GM12878 (cell line): ENCODE measurements at regions of chr11 and their contacts with region 1.

Region 1: GRCh38 chr11:45917623-45918330 is at the start of gene PEX16:
- DNase-seq: peak; percentile 94
- ATAC-seq: peak; percentile 92
- H3K4me3 ChIP-seq: peak within 1 kb of the TSS; percentile 99
- H3K27ac ChIP-seq: peak within 1 kb of the TSS; percentile 92
- H3K4me1 ChIP-seq: peaks cover 18% of the 10 kb centered on the region
- H3K27me3 ChIP-seq: peaks cover 2 to 4% of the 10 kb centered on the region in 2 experiments; a peak in 3 of 4 replicates
- CTCF ChIP-seq: no peak
- EP300 ChIP-seq: no peak; a peak in 1 of 4 replicates
- POLR2A ChIP-seq: peak; percentile 99
- RAD21 ChIP-seq: no peak
- polyA plus RNA-seq, gene PEX16: 1.4 to 5.6 TPM

Region 2: GRCh38 chr11:45665206-45665932 is 252.4 kb before region 1 on chr11 and contains the start of gene CHST1:
- CTCF ChIA-PET with region 1: no interaction called
- POLR2A ChIA-PET with region 1: no interaction called
- RAD21 ChIA-PET with region 1: no interaction called
- SMC1A ChIA-PET with region 1: no interaction called
- in situ Hi-C with region 1: no loop called
- intact Hi-C with region 1: no loop called
- DNase-seq: no peak
- ATAC-seq: peak; percentile 29; the same call in 2 of the 3 replicates
- H3K4me3 ChIP-seq: no peak within 1 kb of the TSS
- H3K27ac ChIP-seq: no peak within 1 kb of the TSS
- H3K4me1 ChIP-seq: no peaks in the 10 kb centered on the region
- H3K27me3 ChIP-seq: peaks cover 21 to 28% of the 10 kb centered on the region in 2 experiments
- CTCF ChIP-seq: no peak
- EP300 ChIP-seq: no peak
- POLR2A ChIP-seq: no peak
- RAD21 ChIP-seq: no peak
- polyA plus RNA-seq, gene CHST1: not detected

Region 3: DNA sequence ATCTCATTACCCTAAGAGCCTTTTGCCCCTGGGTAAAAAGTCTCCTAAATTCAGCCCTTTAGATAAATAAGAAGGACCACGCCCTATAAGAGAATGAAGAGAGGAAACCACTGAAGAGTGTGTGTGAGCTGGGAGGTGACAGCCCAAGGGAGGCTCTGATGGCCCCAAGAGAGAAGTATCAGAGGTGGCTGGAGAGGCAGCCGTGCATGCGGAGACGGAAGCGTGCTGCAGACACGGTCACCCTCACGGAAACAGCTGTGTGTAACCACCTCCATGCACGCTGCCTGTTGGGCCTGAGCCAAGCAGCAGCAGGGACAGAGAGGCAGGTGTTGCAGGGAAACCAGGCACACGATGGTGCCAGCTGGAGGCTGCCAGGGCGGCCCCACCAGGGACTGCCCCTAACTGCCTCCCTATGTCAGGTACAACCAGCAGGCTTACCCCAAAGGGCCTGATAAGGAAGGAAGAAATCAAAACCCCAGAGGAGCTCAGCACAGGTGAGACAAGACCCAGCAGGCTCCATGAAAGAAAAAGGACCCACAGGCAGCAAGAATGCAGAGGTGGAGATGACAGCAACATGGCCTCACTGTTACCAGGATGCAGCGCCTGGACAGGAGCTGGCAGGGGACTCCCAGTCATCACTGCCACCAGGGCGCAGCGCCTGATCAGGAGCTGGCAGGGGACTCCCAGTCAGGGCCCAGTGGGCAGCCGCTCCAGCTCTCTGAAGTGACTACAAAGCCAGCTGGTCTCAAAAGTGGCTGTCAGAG is 12.4 kb after region 1 on chr11:
- CTCF ChIA-PET with region 1: interaction called, 12 read pairs
- POLR2A ChIA-PET with region 1: interaction called, 27 read pairs
- RAD21 ChIA-PET with region 1: interaction called, 29 read pairs
- SMC1A ChIA-PET with region 1: interaction called, 31 read pairs
- in situ Hi-C with region 1: no loop called
- intact Hi-C with region 1: loop called (anchors 1 kb)
- DNase-seq: peak; percentile 88
- ATAC-seq: peak; percentile 89
- H3K4me3 ChIP-seq: no peak overlapping the region
- H3K27ac ChIP-seq: peak overlapping the region; percentile 35
- H3K4me1 ChIP-seq: peaks cover 49% of the 10 kb centered on the region
- H3K27me3 ChIP-seq: no peaks in the 10 kb centered on the region; a peak in 1 of 4 replicates
- CTCF ChIP-seq: no peak; a peak in 1 of 6 replicates
- EP300 ChIP-seq: peak; percentile 63 to 81
- POLR2A ChIP-seq: peak; percentile 29; the same call in 1 of the 2 replicates
- RAD21 ChIP-seq: no peak

Region 4: DNA sequence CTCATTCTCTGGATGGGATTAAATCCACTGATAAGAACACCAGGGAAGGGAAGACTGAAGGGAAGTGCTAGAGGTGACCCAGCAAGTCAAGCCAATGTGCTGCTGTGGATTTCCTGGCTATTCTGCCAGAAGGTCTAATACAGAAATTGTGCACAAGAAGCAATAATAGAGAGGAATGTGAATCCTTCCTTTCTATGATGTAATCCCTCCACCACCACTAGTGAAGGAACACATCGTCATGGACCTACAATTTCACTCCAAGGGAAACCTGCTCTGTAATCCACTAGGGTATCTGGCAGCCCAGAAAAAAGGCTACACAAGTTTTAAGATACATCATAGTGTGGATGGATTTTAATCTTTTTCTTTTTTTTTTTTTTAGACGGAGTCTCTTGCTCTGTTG is 22.1 kb after region 1 on chr11:
- CTCF ChIA-PET with region 1: interaction called, 3 read pairs
- POLR2A ChIA-PET with region 1: interaction called, 8 read pairs
- RAD21 ChIA-PET with region 1: interaction called, 9 read pairs
- SMC1A ChIA-PET with region 1: interaction called, 13 read pairs
- in situ Hi-C with region 1: no loop called
- intact Hi-C with region 1: no loop called
- DNase-seq: no peak
- ATAC-seq: no peak
- H3K4me3 ChIP-seq: no peak overlapping the region
- H3K27ac ChIP-seq: no peak overlapping the region
- H3K4me1 ChIP-seq: peaks cover 9% of the 10 kb centered on the region
- H3K27me3 ChIP-seq: no peaks in the 10 kb centered on the region
- CTCF ChIP-seq: no peak
- EP300 ChIP-seq: no peak
- POLR2A ChIP-seq: no peak
- RAD21 ChIP-seq: no peak